ENCODE measurements at regions of chr3 and their contacts with region 1.

Region 1: GRCh38 chr3:50617096-50617791 is at the start of gene MAPKAPK3:
- DNase-seq: no peak
- ATAC-seq: peak; percentile 30
- H3K4me3 ChIP-seq: peak within 1 kb of the TSS; percentile 87
- H3K27ac ChIP-seq: peak within 1 kb of the TSS; percentile 57
- H3K4me1 ChIP-seq: peaks cover 23% of the 10 kb centered on the region
- H3K27me3 ChIP-seq: no peaks in the 10 kb centered on the region
- CTCF ChIP-seq: no peak
- EP300 ChIP-seq: no peak
- POLR2A ChIP-seq: peak; percentile 71
- RAD21 ChIP-seq: no peak
- polyA plus RNA-seq, gene MAPKAPK3: 7.9 to 8.7 TPM

Region 2: GRCh38 chr3:50627407-50628051 is 10.3 kb after region 1 on chr3:
- CTCF ChIA-PET with region 1: interaction called, 35 read pairs
- POLR2A ChIA-PET with region 1: interaction called, 10 read pairs
- RAD21 ChIA-PET with region 1: interaction called, 19 read pairs
- SMC1A ChIA-PET with region 1: interaction called, 26 read pairs
- in situ Hi-C with region 1: no loop called
- intact Hi-C with region 1: no loop called
- DNase-seq: no peak
- ATAC-seq: peak; percentile 55
- H3K4me3 ChIP-seq: no peak overlapping the region
- H3K27ac ChIP-seq: no peak overlapping the region
- H3K4me1 ChIP-seq: peaks cover 22% of the 10 kb centered on the region
- H3K27me3 ChIP-seq: no peaks in the 10 kb centered on the region
- CTCF ChIP-seq: peak; percentile 27 to 42 (median 37); a peak in 3 of 6 replicates
- EP300 ChIP-seq: no peak
- POLR2A ChIP-seq: no peak
- RAD21 ChIP-seq: peak; percentile 61

Region 3: DNA sequence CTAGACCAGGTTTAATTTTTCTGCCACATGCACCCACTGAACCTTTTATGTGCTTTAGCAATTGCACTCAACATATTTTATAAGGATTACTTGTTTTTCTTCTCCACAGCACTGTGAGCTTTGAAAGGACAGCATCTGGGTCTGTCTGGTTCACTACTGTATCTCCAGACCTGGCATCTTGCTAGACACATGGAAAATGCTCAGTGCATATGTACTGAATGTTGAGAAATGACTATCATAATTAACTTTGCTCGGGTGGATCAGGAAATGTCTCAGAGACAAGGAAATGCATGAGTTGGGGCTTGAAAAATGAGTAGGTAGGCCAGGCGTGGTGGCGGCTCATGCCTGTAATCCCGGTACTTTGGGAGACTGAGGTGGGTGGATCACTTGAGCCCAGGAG is 97.7 kb after region 1 on chr3:
- CTCF ChIA-PET with region 1: no interaction called
- POLR2A ChIA-PET with region 1: no interaction called
- RAD21 ChIA-PET with region 1: no interaction called
- SMC1A ChIA-PET with region 1: no interaction called
- in situ Hi-C with region 1: no loop called
- intact Hi-C with region 1: no loop called
- DNase-seq: no peak
- ATAC-seq: no peak
- H3K4me3 ChIP-seq: no peak overlapping the region
- H3K27ac ChIP-seq: no peak overlapping the region
- H3K4me1 ChIP-seq: no peaks in the 10 kb centered on the region
- H3K27me3 ChIP-seq: no peaks in the 10 kb centered on the region
- CTCF ChIP-seq: no peak
- EP300 ChIP-seq: no peak
- POLR2A ChIP-seq: no peak
- RAD21 ChIP-seq: no peak